ENCODE measurements at regions of chr20 and their contacts with region 1.

Region 1: DNA sequence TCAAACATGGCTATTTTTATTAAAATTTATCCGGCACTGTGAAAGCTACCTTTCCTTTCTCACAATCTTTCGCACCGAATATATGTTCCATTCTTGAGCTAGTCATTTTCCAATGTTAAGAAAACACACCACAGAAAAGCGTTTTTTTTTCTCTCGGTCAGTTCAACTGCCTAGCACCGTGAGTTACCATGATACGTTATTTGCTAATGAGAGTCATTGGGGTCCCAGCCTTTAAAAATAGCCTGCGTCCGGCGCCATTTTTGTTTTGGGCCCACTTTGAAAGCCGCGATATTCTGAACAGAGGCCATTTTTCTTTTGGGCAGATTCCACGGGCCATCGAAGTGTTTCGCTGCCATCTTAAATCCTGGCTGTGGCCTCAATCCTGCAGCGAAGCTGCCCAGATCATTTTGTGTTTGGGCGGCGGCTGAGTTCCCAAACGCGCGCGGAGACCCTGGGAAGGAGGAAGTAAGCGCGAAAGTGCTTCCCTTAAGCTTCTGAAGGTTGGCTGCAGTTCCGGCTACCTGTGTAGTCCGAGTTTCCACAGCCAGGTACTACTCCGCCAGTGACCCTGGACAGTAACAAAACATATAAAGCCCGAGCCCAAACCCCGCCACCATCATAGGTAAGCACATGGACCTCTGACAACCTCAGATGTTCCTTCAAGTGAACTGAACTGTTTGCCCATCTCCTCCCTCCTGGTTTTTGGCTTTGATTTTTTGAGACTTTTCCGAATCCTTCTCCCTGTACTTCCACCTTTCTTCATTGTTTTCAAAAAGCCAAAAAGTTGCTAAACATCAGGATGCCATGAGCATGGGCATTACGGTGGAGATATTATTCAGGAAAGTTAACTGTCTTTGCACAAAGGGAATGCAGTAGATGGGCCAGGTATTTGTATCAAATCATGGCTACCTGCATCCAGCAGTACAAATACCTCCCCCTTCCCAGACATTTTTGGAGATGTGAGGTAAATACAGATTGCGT is at the start of gene SLX4IP:
- DNase-seq: peak; percentile 69 to 95 (median 81)
- ATAC-seq: peak; percentile 55
- H3K4me3 ChIP-seq: peak within 1 kb of the TSS; percentile 79 to 89
- H3K4me3 Mint-ChIP-seq: peak within 1 kb of the TSS; percentile 92
- H3K27ac ChIP-seq: peak within 1 kb of the TSS; percentile 84 to 85
- H3K27ac Mint-ChIP-seq: peak within 1 kb of the TSS; percentile 96
- H3K4me1 ChIP-seq: peaks cover 17% of the 10 kb centered on the region
- H3K4me1 Mint-ChIP-seq: peaks cover 44% of the 10 kb centered on the region
- H3K27me3 ChIP-seq: no peaks in the 10 kb centered on the region
- H3K27me3 Mint-ChIP-seq: no peaks in the 10 kb centered on the region
- CTCF ChIP-seq: no peak
- total RNA-seq, gene SLX4IP: 0.92 to 1.2 TPM

Region 2: DNA sequence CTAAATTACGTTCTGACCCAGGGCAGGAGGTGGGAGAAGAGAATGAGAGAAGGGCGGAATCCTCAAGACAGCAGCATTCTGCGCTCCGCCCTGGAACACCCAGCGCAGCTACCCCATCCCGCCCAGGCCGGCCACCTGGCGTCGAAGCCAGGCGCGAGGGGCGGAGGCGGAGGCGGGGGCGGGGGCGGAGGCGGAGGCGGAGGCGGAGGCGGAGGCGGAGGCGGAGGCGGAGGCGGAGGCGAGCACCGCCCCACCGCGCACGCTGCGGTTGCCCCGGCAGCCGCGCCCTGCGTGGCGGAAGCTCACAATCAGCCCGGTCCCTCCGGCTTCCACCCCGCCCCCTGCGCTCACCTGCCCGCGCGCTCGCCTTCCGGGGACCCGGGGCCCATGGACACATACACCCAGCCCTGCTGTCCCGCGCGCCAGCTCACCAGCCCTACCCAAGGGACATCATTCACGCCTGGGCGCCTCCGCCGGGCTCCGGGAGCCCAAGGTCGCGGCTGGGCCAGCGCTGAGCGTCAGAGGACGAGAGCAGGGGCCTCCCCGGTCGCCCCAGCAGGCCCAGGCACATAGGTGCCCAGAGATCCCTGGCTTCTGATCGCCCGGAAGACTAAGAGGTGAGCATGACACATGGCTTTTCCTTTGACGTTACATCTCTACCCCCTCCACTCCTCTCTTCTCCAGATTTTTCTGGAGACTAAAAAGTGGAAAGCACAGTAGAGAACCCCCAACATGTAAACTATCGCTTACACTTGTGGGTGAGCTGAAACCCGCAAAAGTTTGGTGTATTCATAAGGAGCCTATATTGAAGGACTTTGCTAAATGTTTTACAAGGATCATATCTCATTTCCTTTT is 400.2 kb before region 1 on chr20 and contains the start of gene ANKEF1:
- CTCF ChIA-PET with region 1: no interaction called
- POLR2A ChIA-PET with region 1: interaction called, 3 read pairs
- intact Hi-C with region 1: loop called (anchors 1 to 2 kb)
- DNase-seq: peak; percentile 52 to 91 (median 80)
- ATAC-seq: peak; percentile 97
- H3K4me3 ChIP-seq: peak within 1 kb of the TSS; percentile 59 to 84
- H3K4me3 Mint-ChIP-seq: peak within 1 kb of the TSS; percentile 76
- H3K27ac ChIP-seq: peak within 1 kb of the TSS; percentile 65 to 79
- H3K27ac Mint-ChIP-seq: peak within 1 kb of the TSS; percentile 33
- H3K4me1 ChIP-seq: peaks cover 10% of the 10 kb centered on the region
- H3K4me1 Mint-ChIP-seq: peaks cover 18% of the 10 kb centered on the region
- H3K27me3 ChIP-seq: no peaks in the 10 kb centered on the region
- H3K27me3 Mint-ChIP-seq: peaks cover 6% of the 10 kb centered on the region
- CTCF ChIP-seq: no peak
- total RNA-seq, gene ANKEF1: 0.52 to 0.58 TPM

Region 3: GRCh38 chr20:10219452-10219791 is 215.7 kb before region 1 on chr20:
- CTCF ChIA-PET with region 1: no interaction called
- POLR2A ChIA-PET with region 1: no interaction called
- intact Hi-C with region 1: loop called in 1 of 2 experiments (anchors 2 kb)
- DNase-seq: peak; percentile 26 to 71 (median 63)
- ATAC-seq: peak; percentile 90
- H3K4me3 ChIP-seq: peak overlapping the region in 1 of 2 experiments; percentile 45
- H3K4me3 Mint-ChIP-seq: peak overlapping the region; percentile 63
- H3K27ac ChIP-seq: no peak overlapping the region
- H3K27ac Mint-ChIP-seq: no peak overlapping the region
- H3K4me1 ChIP-seq: peaks cover 7% of the 10 kb centered on the region
- H3K4me1 Mint-ChIP-seq: peaks cover 20% of the 10 kb centered on the region
- H3K27me3 ChIP-seq: peaks cover 9 to 12% of the 10 kb centered on the region in 2 experiments
- H3K27me3 Mint-ChIP-seq: peaks cover 60% of the 10 kb centered on the region
- CTCF ChIP-seq: no peak

Region 4: DNA sequence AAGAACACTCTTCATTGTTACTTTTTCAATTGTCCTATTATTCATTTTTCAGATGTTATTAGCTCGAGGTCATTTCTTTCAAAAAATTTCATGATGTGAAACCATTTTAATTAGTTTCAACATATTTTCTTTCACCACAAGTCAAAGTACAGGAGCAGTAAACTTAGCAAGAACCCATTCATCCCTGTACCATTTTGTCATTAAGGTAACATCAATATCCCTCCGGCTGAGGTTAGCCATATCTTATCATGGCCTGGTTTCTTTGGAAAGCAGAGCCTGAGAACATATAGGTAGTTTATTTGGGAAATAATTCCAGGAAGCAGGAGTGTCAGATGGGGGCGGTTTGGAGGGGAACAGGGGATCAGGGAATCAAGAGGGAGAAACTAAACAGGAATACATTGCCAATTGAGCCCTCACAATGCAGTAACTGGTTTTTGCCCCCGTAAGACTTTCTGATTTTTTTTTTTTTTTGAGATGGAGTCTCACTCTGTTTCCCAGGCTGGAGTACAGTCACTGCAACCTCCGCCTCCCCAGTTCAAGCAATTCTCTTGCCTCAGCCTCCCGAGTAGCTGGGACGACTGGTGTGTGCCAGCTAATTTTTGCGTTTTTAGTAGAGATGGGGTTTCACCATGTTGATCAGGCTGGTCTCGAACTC is 84.8 kb before region 1 on chr20:
- CTCF ChIA-PET with region 1: interaction called, 3 read pairs
- POLR2A ChIA-PET with region 1: interaction called, 3 read pairs
- intact Hi-C with region 1: loop called in 1 of 2 experiments (anchors 2 kb)
- DNase-seq: no peak
- ATAC-seq: no peak
- H3K4me3 ChIP-seq: peak overlapping the region in 1 of 2 experiments; percentile 10
- H3K4me3 Mint-ChIP-seq: peak overlapping the region; percentile 70
- H3K27ac ChIP-seq: peak overlapping the region; percentile 14 to 86
- H3K27ac Mint-ChIP-seq: peak overlapping the region; percentile 75
- H3K4me1 ChIP-seq: peaks cover 4% of the 10 kb centered on the region
- H3K4me1 Mint-ChIP-seq: peaks cover 16% of the 10 kb centered on the region
- H3K27me3 ChIP-seq: no peaks in the 10 kb centered on the region
- H3K27me3 Mint-ChIP-seq: no peaks in the 10 kb centered on the region
- CTCF ChIP-seq: no peak

Region 5: GRCh38 chr20:10447027-10447426 is 11.9 kb after region 1 on chr20:
- CTCF ChIA-PET with region 1: no interaction called
- POLR2A ChIA-PET with region 1: interaction called, 6 read pairs
- intact Hi-C with region 1: loop called in 1 of 2 experiments (anchors 1 kb)
- DNase-seq: peak in 8 of 9 experiments; percentile 18 to 81 (median 58)
- ATAC-seq: peak; percentile 98
- H3K4me3 ChIP-seq: peak overlapping the region in 1 of 2 experiments; percentile 2
- H3K4me3 Mint-ChIP-seq: peak overlapping the region; percentile 58
- H3K27ac ChIP-seq: no peak overlapping the region
- H3K27ac Mint-ChIP-seq: peak overlapping the region; percentile 39
- H3K4me1 ChIP-seq: no peaks in the 10 kb centered on the region
- H3K4me1 Mint-ChIP-seq: peaks cover 23% of the 10 kb centered on the region
- H3K27me3 ChIP-seq: no peaks in the 10 kb centered on the region
- H3K27me3 Mint-ChIP-seq: no peaks in the 10 kb centered on the region
- CTCF ChIP-seq: no peak

Region 6: GRCh38 chr20:10501402-10501801 is 66.3 kb after region 1 on chr20:
- CTCF ChIA-PET with region 1: interaction called, 3 read pairs
- POLR2A ChIA-PET with region 1: no interaction called
- intact Hi-C with region 1: loop called (anchors 2 to 5 kb)
- DNase-seq: peak in 7 of 9 experiments; percentile 6 to 68 (median 28)
- ATAC-seq: peak; percentile 41
- H3K4me3 ChIP-seq: peak overlapping the region; percentile 46 to 51
- H3K4me3 Mint-ChIP-seq: peak overlapping the region; percentile 88
- H3K27ac ChIP-seq: peak overlapping the region; percentile 49 to 77
- H3K27ac Mint-ChIP-seq: peak overlapping the region; percentile 97
- H3K4me1 ChIP-seq: peaks cover 10% of the 10 kb centered on the region
- H3K4me1 Mint-ChIP-seq: peaks cover 39% of the 10 kb centered on the region
- H3K27me3 ChIP-seq: no peaks in the 10 kb centered on the region
- H3K27me3 Mint-ChIP-seq: no peaks in the 10 kb centered on the region
- CTCF ChIP-seq: no peak

Measured in CD8-positive, alpha-beta T cell (primary cell).